Transverse colon (tissue), 4 donors: ENCODE measurements at regions of chr15 and their contacts with region 1.

Region 1: DNA sequence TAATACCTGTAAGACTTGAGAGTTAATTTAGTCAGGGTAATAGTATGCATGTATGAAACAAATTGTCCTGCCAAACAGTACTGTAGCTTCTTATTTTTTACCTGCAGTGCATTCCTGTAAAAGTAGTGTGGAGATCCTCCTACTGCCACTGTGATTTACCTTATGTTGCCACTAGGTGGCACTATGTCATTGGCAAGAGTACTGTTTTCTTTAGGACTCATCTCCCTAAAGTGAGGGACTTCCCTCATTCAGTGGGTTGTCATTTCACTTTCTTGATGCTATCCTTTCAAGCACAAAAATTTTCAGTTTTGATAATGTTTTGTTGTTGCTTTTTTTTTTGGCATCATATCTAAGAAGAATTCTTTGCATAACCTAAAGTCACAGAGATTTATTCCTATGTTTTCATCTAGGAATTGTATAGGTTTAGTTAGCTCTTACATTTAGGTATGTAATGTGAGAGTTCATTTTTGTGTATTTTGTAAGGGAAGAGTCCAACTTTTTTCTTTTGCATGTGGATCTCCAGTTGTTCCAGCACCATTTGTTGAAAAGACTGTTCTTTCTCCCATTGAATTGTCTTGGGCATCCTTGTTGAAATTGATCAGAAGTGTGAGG is 105.7 kb downstream of the AKAP13 start:
- DNase-seq: peak; percentile 59
- H3K4me3 ChIP-seq: no peak overlapping the region
- H3K27ac ChIP-seq: no peak overlapping the region
- H3K4me1 ChIP-seq: peaks cover 0 to 27% (median 6%) of the 10 kb centered on the region in 4 donors
- H3K27me3 ChIP-seq: no peaks in the 10 kb centered on the region
- CTCF ChIP-seq: peak; percentile 61 to 87 (median 79)
- EP300 ChIP-seq: no peak
- POLR2A ChIP-seq: no peak

Region 2: GRCh38 chr15:85318048-85318731 is 167.9 kb before region 1 on chr15:
- in situ Hi-C with region 1: loop called in 1 of 4 experiments (anchors 25 kb)
- intact Hi-C with region 1: no loop called
- DNase-seq: peak; percentile 84
- H3K4me3 ChIP-seq: no peak overlapping the region
- H3K27ac ChIP-seq: peak overlapping the region; percentile 77 to 87 (median 86)
- H3K4me1 ChIP-seq: peaks cover 13 to 42% (median 33%) of the 10 kb centered on the region in 4 donors
- H3K27me3 ChIP-seq: no peaks in the 10 kb centered on the region
- CTCF ChIP-seq: peak in 2 of 5 experiments; percentile 20 to 37
- EP300 ChIP-seq: no peak
- POLR2A ChIP-seq: peak; percentile 72

Region 3: GRCh38 chr15:85463276-85463892 is 22.7 kb before region 1 on chr15:
- in situ Hi-C with region 1: no loop called
- intact Hi-C with region 1: no loop called
- DNase-seq: no peak
- H3K4me3 ChIP-seq: no peak overlapping the region
- H3K27ac ChIP-seq: no peak overlapping the region
- H3K4me1 ChIP-seq: peaks cover 0 to 20% (median 4%) of the 10 kb centered on the region in 4 donors
- H3K27me3 ChIP-seq: no peaks in the 10 kb centered on the region
- CTCF ChIP-seq: no peak
- EP300 ChIP-seq: no peak
- POLR2A ChIP-seq: no peak

Region 4: DNA sequence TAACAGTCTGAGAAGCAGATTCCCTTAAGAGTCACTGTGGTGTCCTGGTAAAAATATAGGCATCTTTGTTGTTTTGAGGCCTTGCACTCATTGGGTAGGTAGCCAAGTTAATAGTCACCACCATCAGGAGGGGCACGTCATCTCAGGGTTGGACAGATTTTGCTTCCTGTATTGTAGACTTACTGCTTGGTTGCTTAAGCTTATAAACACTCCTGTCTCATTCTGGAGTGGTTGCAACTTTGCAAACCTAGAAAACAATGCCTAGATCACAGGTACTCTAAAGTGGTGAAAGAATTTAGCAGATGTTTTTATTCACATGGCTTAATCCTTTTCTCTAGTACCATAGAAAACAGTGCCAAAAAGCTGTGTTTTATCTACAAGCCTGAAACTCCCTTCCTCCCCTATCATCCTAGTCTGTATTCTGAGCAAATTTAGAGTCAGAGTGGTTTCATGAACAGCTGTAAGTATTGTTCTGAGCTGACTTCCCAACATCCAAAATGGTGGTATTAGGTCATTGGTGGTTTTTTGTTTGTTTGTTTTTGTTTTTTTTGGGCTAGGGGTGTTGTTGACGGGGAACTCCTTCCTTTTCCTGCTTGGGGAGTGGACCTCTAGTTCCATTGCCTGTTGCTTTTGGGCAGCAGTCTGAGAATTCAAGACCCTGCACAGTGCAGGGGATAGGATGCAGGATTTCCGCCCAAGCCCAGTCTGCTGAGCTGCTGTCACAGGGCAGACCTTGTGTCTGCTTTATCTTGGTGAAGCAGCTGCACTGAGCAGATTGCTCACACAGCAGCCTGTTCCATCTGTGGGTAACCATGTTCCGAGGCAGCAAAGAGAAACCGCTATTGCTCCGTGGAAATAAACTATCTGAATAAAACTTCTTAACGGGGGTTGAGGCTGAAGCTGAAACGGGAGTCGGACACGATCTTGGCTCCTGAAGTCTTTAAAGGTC is 96.3 kb after region 1 on chr15:
- in situ Hi-C with region 1: loop called in 1 of 4 experiments (anchors 25 kb)
- intact Hi-C with region 1: no loop called
- DNase-seq: peak; percentile 75
- H3K4me3 ChIP-seq: peak overlapping the region; percentile 13 to 49 (median 22)
- H3K27ac ChIP-seq: peak overlapping the region; percentile 86 to 93 (median 90)
- H3K4me1 ChIP-seq: peaks cover 27 to 94% (median 62%) of the 10 kb centered on the region in 4 donors
- H3K27me3 ChIP-seq: no peaks in the 10 kb centered on the region
- CTCF ChIP-seq: no peak
- EP300 ChIP-seq: no peak
- POLR2A ChIP-seq: peak; percentile 43

Region 5: GRCh38 chr15:85730001-85730820 is 244.1 kb after region 1 on chr15:
- in situ Hi-C with region 1: loop called in 1 of 4 experiments (anchors 25 kb)
- intact Hi-C with region 1: no loop called
- DNase-seq: no peak
- H3K4me3 ChIP-seq: no peak overlapping the region
- H3K27ac ChIP-seq: peak overlapping the region in 3 of 4 donors; percentile 13 to 41 (median 14)
- H3K4me1 ChIP-seq: peaks cover 6 to 33% (median 17%) of the 10 kb centered on the region in 4 donors
- H3K27me3 ChIP-seq: no peaks in the 10 kb centered on the region
- CTCF ChIP-seq: peak; percentile 69 to 84 (median 73)
- EP300 ChIP-seq: no peak
- POLR2A ChIP-seq: no peak

Region 6: DNA sequence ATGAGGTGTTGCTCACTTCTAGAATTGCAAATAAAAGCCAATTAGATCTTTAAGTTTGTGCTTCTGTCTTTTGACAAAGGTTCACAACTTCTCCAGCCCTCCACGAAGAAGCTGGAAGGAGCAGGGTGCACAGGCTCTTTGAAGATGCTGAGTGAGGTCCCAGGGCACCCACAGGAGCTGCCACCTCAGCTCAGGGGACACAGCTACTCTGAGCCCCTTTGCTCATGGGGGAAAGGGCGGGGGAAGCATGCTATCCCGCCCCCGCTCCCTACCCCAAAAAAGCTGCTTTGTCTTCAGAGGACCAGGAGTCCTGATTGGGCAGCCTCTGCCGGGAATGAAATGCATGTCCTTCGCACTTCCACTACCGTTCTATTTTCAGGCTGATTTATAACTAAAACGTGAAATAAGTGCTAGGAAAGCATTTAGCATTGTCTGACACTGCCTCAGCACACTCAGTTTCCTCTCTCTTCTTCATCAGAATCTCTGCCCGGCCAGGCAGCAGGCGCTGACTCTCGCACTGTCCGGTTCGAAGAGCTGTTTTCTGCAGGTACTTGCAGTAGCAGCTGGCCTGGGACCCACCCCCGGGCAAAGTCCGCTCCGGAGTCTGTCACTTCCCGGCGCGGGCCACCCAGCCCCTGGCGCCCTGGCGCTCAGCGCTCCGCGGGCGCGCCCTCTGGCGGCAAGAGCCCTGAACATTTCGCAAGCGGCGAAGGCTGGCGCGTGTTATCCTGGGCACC is 354.2 kb after region 1 on chr15:
- in situ Hi-C with region 1: loop called in 3 of 4 experiments (anchors 10 to 25 kb)
- intact Hi-C with region 1: no loop called
- DNase-seq: peak; percentile 96
- H3K4me3 ChIP-seq: peak overlapping the region in 2 of 4 donors; percentile 4 to 45
- H3K27ac ChIP-seq: peak overlapping the region; percentile 81 to 92 (median 88)
- H3K4me1 ChIP-seq: peaks cover 5 to 46% (median 27%) of the 10 kb centered on the region in 4 donors
- H3K27me3 ChIP-seq: peaks cover 6% of the 10 kb centered on the region
- CTCF ChIP-seq: peak; percentile 86 to 94 (median 88)
- EP300 ChIP-seq: no peak
- POLR2A ChIP-seq: peak; percentile 78